Right ventricle myocardium superior (tissue), 1 donor: ENCODE measurements at regions of chr14 and their contacts with region 1.

Region 1: GRCh38 chr14:103546652-103547454 is 15.6 kb downstream of the BAG5 start:
- DNase-seq: peak; percentile 86
- ATAC-seq: peak; percentile 28

Region 2: DNA sequence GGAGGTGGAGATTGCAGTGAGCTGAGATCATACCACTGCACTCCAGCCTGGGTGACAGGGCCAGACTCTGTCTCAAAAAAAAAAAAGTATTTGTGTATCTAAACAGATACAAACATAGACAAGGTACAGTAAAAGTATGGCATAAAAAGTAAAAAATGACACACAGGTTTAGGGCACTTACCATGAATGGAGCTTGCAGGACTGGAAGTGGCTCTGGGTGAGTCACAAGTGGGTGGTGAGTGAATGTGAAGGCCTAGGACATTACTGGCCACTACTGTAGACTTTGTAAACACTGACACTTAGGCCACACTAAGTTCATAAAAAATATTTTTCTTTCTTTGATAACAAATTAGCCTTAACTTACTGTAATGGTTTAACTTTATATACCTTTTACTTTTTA is 250.9 kb before region 1 on chr14:
- intact Hi-C with region 1: no loop called
- DNase-seq: no peak
- ATAC-seq: no peak

Region 3: DNA sequence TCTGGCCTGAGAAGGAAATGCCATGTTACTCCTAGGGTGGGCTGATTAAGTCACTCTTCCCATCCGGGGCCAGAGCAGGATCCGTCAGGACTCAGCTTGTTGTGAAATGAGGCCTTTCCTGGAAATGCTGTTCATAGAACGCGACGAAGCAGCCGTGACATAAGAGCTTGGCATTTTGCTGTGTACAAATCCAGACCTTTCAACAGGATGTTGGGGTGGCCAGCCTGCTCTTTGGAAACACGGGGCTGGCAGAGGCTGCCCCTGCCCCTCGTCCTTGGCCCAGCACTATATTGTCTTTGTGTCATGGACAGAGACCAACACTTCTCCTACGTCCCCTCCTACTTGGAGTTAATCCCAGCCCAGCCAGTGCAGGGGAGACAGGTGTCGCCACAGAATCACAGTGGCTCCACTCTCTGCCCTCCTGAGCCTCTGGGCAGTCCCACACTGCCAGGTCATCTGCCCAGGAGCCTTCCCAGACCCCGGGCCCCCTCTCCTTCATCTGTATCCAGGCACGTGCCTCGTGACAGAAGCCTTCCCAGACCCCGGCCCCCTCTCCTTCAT is 231.4 kb before region 1 on chr14:
- intact Hi-C with region 1: no loop called
- DNase-seq: peak; percentile 58
- ATAC-seq: peak; percentile 79

Region 4: DNA sequence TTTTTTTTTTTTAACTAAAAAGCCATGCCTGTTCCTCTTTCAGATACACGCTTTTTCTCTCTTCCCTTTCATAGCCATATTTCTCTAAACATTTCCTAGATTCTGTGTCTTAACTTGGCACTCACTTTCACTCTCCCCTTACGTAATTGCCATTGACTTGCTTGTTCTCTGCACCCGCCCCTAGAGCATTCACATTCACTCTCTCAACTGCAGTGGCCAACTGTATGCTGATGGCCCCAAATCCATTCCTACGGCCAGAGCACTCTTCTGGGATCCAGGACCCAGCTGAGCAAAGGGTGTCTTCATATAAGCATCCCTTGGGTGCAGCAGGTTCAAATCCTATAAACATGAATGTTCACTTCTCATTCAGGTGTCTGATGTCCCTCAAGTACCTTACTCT is 83.7 kb before region 1 on chr14:
- intact Hi-C with region 1: no loop called
- DNase-seq: no peak
- ATAC-seq: no peak

Region 5: GRCh38 chr14:103500148-103500990 is 46.5 kb before region 1 on chr14:
- intact Hi-C with region 1: loop called (anchors 5 kb)
- DNase-seq: peak; percentile 95
- ATAC-seq: peak; percentile 84